ENCODE measurements at regions of chr12 and their contacts with region 1.

Region 1: DNA sequence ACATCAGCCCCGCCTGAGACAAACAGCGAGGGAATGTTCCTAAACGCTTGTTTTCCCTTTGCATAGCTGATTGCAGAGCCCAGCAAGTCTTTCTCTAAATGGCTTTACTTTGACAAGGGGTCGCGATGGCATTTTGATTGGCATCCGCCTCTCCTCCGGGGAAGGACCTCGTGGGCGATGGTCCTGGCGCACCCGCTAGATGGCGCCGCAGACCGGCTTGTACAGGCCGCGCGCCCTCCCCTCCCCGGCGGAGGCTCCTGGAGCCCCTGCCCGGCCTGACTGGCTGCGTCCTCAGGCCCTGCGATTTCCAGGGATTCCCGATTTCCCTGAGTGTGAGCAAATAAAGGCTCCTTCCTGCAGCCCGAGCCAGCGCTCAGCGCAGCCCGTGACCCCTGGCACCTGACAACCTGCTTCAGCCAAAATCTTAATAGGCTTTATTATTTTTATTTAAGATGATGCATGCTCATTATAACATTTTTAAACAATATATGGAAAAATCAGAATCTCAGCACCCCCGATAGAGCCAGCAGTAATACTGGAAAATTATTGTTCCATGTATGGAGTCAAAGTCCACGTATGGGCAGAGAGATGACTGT is 468.3 kb downstream of the AACS start:
- DNase-seq: peak; percentile 11
- ATAC-seq: peak; percentile 98
- H3K4me3 ChIP-seq: no peak overlapping the region
- H3K27ac ChIP-seq: no peak overlapping the region
- H3K4me1 ChIP-seq: no peaks in the 10 kb centered on the region
- H3K27me3 ChIP-seq: peaks cover 0 to 5% of the 10 kb centered on the region in 2 experiments; a peak in 1 of 5 replicates
- CTCF ChIP-seq: peak; percentile 89
- EP300 ChIP-seq: no peak
- POLR2A ChIP-seq: no peak
- RAD21 ChIP-seq: peak; percentile 76

Region 2: DNA sequence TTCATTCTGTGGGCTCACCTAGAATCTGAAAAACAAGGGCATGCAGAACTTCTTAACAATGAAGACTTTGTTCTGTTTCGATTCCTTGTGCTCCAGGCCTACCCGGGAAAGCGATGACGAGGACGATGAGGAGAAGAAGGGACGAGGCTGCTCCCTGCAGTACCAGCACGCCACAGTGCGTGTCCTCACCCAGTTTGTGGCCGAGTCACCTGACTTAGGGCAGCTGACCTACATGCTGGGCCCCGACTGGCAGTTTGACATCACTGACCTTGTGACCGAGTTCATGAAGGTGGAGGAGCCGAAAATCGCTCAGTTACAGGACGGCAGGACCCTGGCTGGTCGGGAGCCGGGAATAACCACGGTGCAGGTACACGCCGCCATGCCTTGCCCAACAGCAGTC is 117.1 kb after region 1 on chr12:
- CTCF ChIA-PET with region 1: no interaction called
- POLR2A ChIA-PET with region 1: no interaction called
- in situ Hi-C with region 1: no loop called
- intact Hi-C with region 1: no loop called
- DNase-seq: no peak
- ATAC-seq: no peak
- H3K4me3 ChIP-seq: no peak overlapping the region
- H3K27ac ChIP-seq: no peak overlapping the region
- H3K4me1 ChIP-seq: no peaks in the 10 kb centered on the region
- H3K27me3 ChIP-seq: no peaks in the 10 kb centered on the region
- CTCF ChIP-seq: no peak
- EP300 ChIP-seq: no peak
- POLR2A ChIP-seq: no peak
- RAD21 ChIP-seq: no peak

Region 3: GRCh38 chr12:125683748-125684381 is 150.3 kb after region 1 on chr12:
- CTCF ChIA-PET with region 1: no interaction called
- POLR2A ChIA-PET with region 1: no interaction called
- in situ Hi-C with region 1: loop called (anchors 10 kb)
- intact Hi-C with region 1: loop called (anchors 5 kb)
- DNase-seq: peak; percentile 31
- ATAC-seq: peak; percentile 98
- H3K4me3 ChIP-seq: no peak overlapping the region
- H3K27ac ChIP-seq: no peak overlapping the region
- H3K4me1 ChIP-seq: no peaks in the 10 kb centered on the region
- H3K27me3 ChIP-seq: no peaks in the 10 kb centered on the region
- CTCF ChIP-seq: peak; percentile 88
- EP300 ChIP-seq: no peak
- POLR2A ChIP-seq: no peak
- RAD21 ChIP-seq: peak; percentile 56; the same call in 1 of the 2 replicates

Region 4: GRCh38 chr12:126747530-126748149 is 1214.1 kb after region 1 on chr12:
- CTCF ChIA-PET with region 1: no interaction called
- POLR2A ChIA-PET with region 1: no interaction called
- in situ Hi-C with region 1: loop called (anchors 25 kb)
- intact Hi-C with region 1: no loop called
- DNase-seq: peak; percentile 9
- ATAC-seq: peak; percentile 87
- H3K4me3 ChIP-seq: no peak overlapping the region
- H3K27ac ChIP-seq: no peak overlapping the region
- H3K4me1 ChIP-seq: no peaks in the 10 kb centered on the region
- H3K27me3 ChIP-seq: no peaks in the 10 kb centered on the region
- CTCF ChIP-seq: peak; percentile 75
- EP300 ChIP-seq: no peak
- POLR2A ChIP-seq: no peak
- RAD21 ChIP-seq: no peak

Region 5: DNA sequence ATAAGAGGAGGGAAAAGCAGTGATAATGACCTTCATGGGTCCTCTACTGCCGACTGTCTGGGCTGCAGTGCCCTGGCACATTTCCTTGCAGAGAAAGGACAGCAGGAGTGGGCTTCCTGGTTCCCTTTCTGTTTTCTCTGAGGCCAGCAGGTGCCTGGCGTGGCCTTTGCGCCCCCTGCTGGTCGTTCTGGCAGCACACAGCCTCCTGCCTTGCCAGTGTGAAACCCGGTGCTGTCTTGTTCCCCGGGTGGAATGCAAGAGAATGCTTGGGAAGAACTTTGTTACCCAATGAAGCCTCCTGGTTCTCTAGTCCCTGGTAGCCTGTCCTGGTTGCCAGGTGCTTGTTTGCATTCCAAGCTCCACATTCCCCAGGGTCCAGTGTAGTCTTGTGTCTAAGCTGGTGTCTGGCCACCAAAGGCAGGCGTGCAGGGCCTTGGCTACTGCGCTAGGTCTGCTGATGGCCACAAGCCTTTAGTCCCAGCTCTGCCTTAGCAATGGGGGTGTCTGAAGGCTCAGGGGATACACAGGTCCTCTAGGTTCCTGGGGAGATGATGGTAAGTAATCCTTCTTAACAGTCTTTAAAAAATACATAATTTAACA is 1341.0 kb after region 1 on chr12:
- CTCF ChIA-PET with region 1: no interaction called
- POLR2A ChIA-PET with region 1: no interaction called
- in situ Hi-C with region 1: loop called (anchors 10 kb)
- intact Hi-C with region 1: no loop called
- DNase-seq: peak; percentile 15
- ATAC-seq: peak; percentile 98
- H3K4me3 ChIP-seq: no peak overlapping the region
- H3K27ac ChIP-seq: no peak overlapping the region
- H3K4me1 ChIP-seq: no peaks in the 10 kb centered on the region
- H3K27me3 ChIP-seq: no peaks in the 10 kb centered on the region
- CTCF ChIP-seq: peak; percentile 83
- EP300 ChIP-seq: no peak
- POLR2A ChIP-seq: no peak
- RAD21 ChIP-seq: peak; percentile 47

Region 6: GRCh38 chr12:127108360-127109215 is 1575.1 kb after region 1 on chr12:
- CTCF ChIA-PET with region 1: no interaction called
- POLR2A ChIA-PET with region 1: no interaction called
- in situ Hi-C with region 1: no loop called
- intact Hi-C with region 1: loop called (anchors 5 kb)
- DNase-seq: peak; percentile 15
- ATAC-seq: peak; percentile 90
- H3K4me3 ChIP-seq: no peak overlapping the region
- H3K27ac ChIP-seq: no peak overlapping the region
- H3K4me1 ChIP-seq: no peaks in the 10 kb centered on the region
- H3K27me3 ChIP-seq: no peaks in the 10 kb centered on the region
- CTCF ChIP-seq: peak; percentile 59
- EP300 ChIP-seq: no peak
- POLR2A ChIP-seq: no peak
- RAD21 ChIP-seq: peak; percentile 32; the same call in 1 of the 2 replicates

Region 7: DNA sequence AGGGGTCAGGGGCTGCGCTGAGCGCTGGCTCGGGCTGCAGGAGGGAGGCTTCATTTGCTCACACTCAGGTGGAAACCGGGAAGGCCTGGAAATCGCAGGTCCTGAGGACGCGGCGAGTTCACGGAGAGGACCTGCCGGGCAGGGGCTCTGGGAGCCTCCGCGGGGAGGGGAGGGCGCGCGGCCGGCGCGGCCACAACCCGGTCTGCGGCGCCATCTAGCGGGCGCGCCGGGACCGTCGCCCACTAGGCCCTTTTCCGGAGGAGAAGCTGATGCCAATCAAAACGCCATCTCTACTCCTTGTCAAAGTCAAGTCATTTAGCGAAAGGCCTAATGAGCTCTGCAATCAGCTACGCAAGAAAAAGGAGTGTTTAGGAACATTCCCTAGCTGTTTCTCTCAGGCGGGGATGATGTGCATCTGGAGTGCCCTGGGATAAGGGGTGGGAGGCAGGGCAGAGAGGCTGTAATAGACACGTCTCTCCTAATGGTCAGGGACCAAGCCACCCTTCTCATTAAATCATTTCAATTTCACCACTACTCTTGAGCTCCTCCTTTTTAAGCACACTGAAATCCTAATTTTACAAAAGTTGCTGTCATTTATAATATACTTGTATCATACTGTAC is 1847.6 kb after region 1 on chr12:
- CTCF ChIA-PET with region 1: no interaction called
- POLR2A ChIA-PET with region 1: no interaction called
- in situ Hi-C with region 1: loop called (anchors 25 kb)
- intact Hi-C with region 1: loop called (anchors 5 kb)
- DNase-seq: peak; percentile 15
- ATAC-seq: peak; percentile 99
- H3K4me3 ChIP-seq: peak overlapping the region in 1 of 3 experiments; percentile 29; a peak in 1 of 6 replicates
- H3K27ac ChIP-seq: no peak overlapping the region
- H3K4me1 ChIP-seq: no peaks in the 10 kb centered on the region
- H3K27me3 ChIP-seq: no peaks in the 10 kb centered on the region
- CTCF ChIP-seq: peak; percentile 80
- EP300 ChIP-seq: no peak
- POLR2A ChIP-seq: no peak
- RAD21 ChIP-seq: peak; percentile 91

Measured in HepG2 (cell line).